H1 (cell line): ENCODE measurements at regions of chr11 and their contacts with region 1.

Region 1: GRCh38 chr11:61792310-61793085 is at the starts of genes FEN1 and TMEM258:
- DNase-seq: peak; percentile 80 to 95
- H3K4me3 ChIP-seq: peak within 1 kb of the TSS; percentile 86 to 99 (median 98)
- H3K27ac ChIP-seq: peak within 1 kb of the TSS; percentile 100
- H3K4me1 ChIP-seq: peaks cover 0 to 4% (median 0%) of the 10 kb centered on the region in 4 experiments; a peak in 1 of 7 replicates
- H3K27me3 ChIP-seq: no peaks in the 10 kb centered on the region
- CTCF ChIP-seq: peak in 1 of 3 experiments; percentile 4; a peak in 1 of 4 replicates
- EP300 ChIP-seq: no peak
- POLR2A ChIP-seq: peak; percentile 57 to 82
- RAD21 ChIP-seq: no peak
- total RNA-seq, gene FEN1: 84.5 and 86.1 TPM in 2 replicates
- total RNA-seq, gene TMEM258: 186 and 191 TPM in 2 replicates

Region 2: DNA sequence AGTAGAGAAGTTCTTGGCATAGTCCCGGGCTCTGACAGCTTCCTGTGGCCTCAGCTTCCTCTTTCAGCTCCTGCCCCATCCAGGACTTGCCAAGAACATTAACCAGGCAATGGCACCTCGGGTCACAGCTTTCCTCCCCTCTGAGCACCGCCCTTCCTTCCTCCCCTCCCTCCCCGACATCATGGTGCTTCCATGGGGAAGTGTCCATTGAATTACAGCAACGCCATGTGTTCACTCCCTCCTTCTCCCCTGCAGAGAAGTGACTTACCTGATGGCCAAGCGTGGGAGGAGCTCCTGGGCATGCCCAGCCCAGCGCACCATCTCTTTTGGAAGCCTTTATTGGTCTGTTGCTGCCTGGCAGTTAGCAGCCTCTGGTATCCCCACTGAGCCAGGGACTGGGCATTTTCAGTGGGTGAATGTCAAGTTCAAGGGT is 138.1 kb before region 1 on chr11:
- CTCF ChIA-PET with region 1: no interaction called
- POLR2A ChIA-PET with region 1: no interaction called
- DNase-seq: no peak
- H3K4me3 ChIP-seq: no peak overlapping the region
- H3K27ac ChIP-seq: no peak overlapping the region
- H3K4me1 ChIP-seq: peaks cover 6 to 15% (median 10%) of the 10 kb centered on the region in 4 experiments
- H3K27me3 ChIP-seq: no peaks in the 10 kb centered on the region
- CTCF ChIP-seq: no peak
- EP300 ChIP-seq: no peak
- POLR2A ChIP-seq: no peak
- RAD21 ChIP-seq: no peak

Region 3: GRCh38 chr11:61747192-61747966 is 45.1 kb before region 1 on chr11:
- CTCF ChIA-PET with region 1: interaction called, 168 read pairs
- POLR2A ChIA-PET with region 1: interaction called, 87 read pairs
- DNase-seq: peak; percentile 41 to 94
- H3K4me3 ChIP-seq: no peak overlapping the region
- H3K27ac ChIP-seq: no peak overlapping the region
- H3K4me1 ChIP-seq: peaks cover 6 to 26% (median 10%) of the 10 kb centered on the region in 4 experiments
- H3K27me3 ChIP-seq: peaks cover 0 to 6% (median 5%) of the 10 kb centered on the region in 4 experiments; a peak in 5 of 7 replicates
- CTCF ChIP-seq: peak in 2 of 3 experiments; percentile 87 to 95; a peak in 3 of 4 replicates
- EP300 ChIP-seq: no peak
- POLR2A ChIP-seq: no peak
- RAD21 ChIP-seq: peak; percentile 71 to 78

Region 4: GRCh38 chr11:61776551-61777075 is 15.9 kb before region 1 on chr11:
- CTCF ChIA-PET with region 1: interaction called, 19 read pairs
- POLR2A ChIA-PET with region 1: interaction called, 56 read pairs
- DNase-seq: peak; percentile 54 to 89
- H3K4me3 ChIP-seq: no peak overlapping the region
- H3K27ac ChIP-seq: no peak overlapping the region
- H3K4me1 ChIP-seq: peaks cover 0 to 16% (median 10%) of the 10 kb centered on the region in 4 experiments; a peak in 6 of 7 replicates
- H3K27me3 ChIP-seq: no peaks in the 10 kb centered on the region; a peak in 1 of 7 replicates
- CTCF ChIP-seq: peak; percentile 76 to 89 (median 80)
- EP300 ChIP-seq: no peak
- POLR2A ChIP-seq: no peak
- RAD21 ChIP-seq: peak; percentile 60 to 77

Region 5: GRCh38 chr11:61827571-61828378 is 35.3 kb after region 1 on chr11 and contains the start of gene FADS2:
- CTCF ChIA-PET with region 1: interaction called, 15 read pairs
- POLR2A ChIA-PET with region 1: interaction called, 354 read pairs
- DNase-seq: peak; percentile 63 to 91
- H3K4me3 ChIP-seq: peak within 1 kb of the TSS; percentile 77 to 96 (median 86)
- H3K27ac ChIP-seq: peak within 1 kb of the TSS; percentile 74
- H3K4me1 ChIP-seq: peaks cover 9 to 28% (median 18%) of the 10 kb centered on the region in 4 experiments
- H3K27me3 ChIP-seq: no peaks in the 10 kb centered on the region
- CTCF ChIP-seq: 0 out of 4 replicates have a peak, but pooled peaks of 1 of the 3 experiments have one; percentile 12
- EP300 ChIP-seq: peak in 1 of 2 experiments; percentile 66; a peak in 1 of 3 replicates
- POLR2A ChIP-seq: peak; percentile 78 to 87; a peak in 2 of 3 replicates
- RAD21 ChIP-seq: no peak
- total RNA-seq, gene FADS2: 499 and 526 TPM in 2 replicates

Region 6: GRCh38 chr11:61847914-61848581 is 55.5 kb after region 1 on chr11:
- CTCF ChIA-PET with region 1: interaction called, 15 read pairs
- POLR2A ChIA-PET with region 1: interaction called, 4 read pairs
- DNase-seq: no peak
- H3K4me3 ChIP-seq: no peak overlapping the region
- H3K27ac ChIP-seq: no peak overlapping the region
- H3K4me1 ChIP-seq: no peaks in the 10 kb centered on the region; a peak in 1 of 7 replicates
- H3K27me3 ChIP-seq: no peaks in the 10 kb centered on the region
- CTCF ChIP-seq: no peak
- EP300 ChIP-seq: no peak
- POLR2A ChIP-seq: no peak
- RAD21 ChIP-seq: no peak

Region 7: DNA sequence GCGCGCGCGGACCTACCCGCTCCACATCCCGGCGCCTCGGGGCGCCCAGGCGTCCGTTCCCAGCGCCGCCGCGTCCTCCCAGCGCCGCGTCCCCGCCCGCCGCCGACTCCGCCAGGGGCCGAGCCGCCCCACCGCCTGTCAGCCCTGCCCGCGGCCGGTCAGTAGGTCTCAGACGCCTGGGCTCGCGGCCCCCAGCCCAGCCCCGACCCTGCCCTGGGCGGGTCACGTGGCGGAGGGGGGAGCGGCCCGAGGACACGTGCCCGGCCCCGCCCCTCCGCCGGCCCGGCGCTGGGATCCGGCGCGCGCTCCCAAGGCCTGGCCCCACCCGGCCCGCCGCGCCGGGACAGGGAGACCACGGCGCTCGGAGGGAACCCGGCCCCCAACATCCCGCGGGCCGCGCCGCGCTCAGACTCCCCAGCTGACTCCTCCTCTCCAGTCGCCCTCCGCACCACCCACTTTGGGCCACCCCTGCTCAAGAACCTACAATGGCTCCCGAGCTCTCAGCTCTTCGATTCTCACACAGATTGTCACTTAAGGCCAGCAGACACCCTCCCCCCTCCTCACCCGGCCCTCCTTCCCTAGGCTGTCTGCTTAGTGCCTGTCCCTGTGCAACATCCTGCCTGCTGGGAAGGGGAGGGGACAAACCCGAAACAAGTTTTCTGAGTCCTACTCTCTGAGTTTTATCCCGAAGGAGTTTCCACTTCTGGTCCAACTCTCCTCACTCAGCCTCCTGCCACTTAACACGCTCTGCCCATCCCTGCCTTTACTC is 125.0 kb after region 1 on chr11 and contains the start of gene RAB3IL1:
- CTCF ChIA-PET with region 1: no interaction called
- POLR2A ChIA-PET with region 1: no interaction called
- DNase-seq: peak in 1 of 2 experiments; percentile 81
- H3K4me3 ChIP-seq: peak within 1 kb of the TSS; percentile 32 to 66 (median 44)
- H3K27ac ChIP-seq: no peak within 1 kb of the TSS
- H3K4me1 ChIP-seq: peaks cover 0 to 13% (median 2%) of the 10 kb centered on the region in 4 experiments; a peak in 3 of 7 replicates
- H3K27me3 ChIP-seq: peaks cover 0 to 28% (median 20%) of the 10 kb centered on the region in 4 experiments; a peak in 6 of 7 replicates
- CTCF ChIP-seq: no peak
- EP300 ChIP-seq: no peak
- POLR2A ChIP-seq: no peak
- RAD21 ChIP-seq: no peak
- total RNA-seq, gene RAB3IL1: 5.7 and 6.8 TPM in 2 replicates

Region 8: GRCh38 chr11:62108017-62108750 is 315.7 kb after region 1 on chr11:
- CTCF ChIA-PET with region 1: interaction called, 13 read pairs
- POLR2A ChIA-PET with region 1: no interaction called
- DNase-seq: peak in 1 of 2 experiments; percentile 19
- H3K4me3 ChIP-seq: no peak overlapping the region
- H3K27ac ChIP-seq: no peak overlapping the region
- H3K4me1 ChIP-seq: no peaks in the 10 kb centered on the region; a peak in 1 of 7 replicates
- H3K27me3 ChIP-seq: no peaks in the 10 kb centered on the region
- CTCF ChIP-seq: peak in 2 of 3 experiments; percentile 77 to 83; a peak in 3 of 4 replicates
- EP300 ChIP-seq: no peak
- POLR2A ChIP-seq: no peak
- RAD21 ChIP-seq: peak; percentile 93 to 94